Esophagus muscularis mucosa (tissue), 4 donors: ENCODE measurements at regions of chr21 and their contacts with region 1.

Region 1: DNA sequence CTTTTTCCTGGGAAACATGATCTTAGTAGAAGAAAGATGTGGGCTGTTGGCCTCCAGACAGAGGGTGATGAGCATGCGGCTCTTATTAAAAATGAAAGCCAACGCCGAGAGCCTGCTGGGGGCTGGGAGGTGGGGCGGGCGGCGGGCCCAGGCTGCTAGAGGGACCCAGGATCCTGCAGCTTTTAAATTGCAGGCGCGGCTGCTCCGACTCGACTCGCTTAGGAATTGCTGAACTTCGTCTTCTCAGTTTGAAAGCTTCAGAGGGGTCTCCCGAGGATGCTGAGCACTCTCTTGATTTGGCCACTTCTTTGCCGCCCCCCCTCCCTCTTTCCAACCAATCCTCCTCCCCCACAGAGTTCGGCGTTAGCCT is 1.2 kb downstream of the AGPAT3 start:
- DNase-seq: no peak
- H3K4me3 ChIP-seq: peak overlapping the region; percentile 92 to 97 (median 96)
- H3K27ac ChIP-seq: peak overlapping the region; percentile 95 to 97 (median 96)
- H3K4me1 ChIP-seq: peaks cover 27 to 47% (median 43%) of the 10 kb centered on the region in 4 donors
- H3K27me3 ChIP-seq: no peaks in the 10 kb centered on the region
- CTCF ChIP-seq: no peak
- EP300 ChIP-seq: no peak
- POLR2A ChIP-seq: no peak

Region 2: DNA sequence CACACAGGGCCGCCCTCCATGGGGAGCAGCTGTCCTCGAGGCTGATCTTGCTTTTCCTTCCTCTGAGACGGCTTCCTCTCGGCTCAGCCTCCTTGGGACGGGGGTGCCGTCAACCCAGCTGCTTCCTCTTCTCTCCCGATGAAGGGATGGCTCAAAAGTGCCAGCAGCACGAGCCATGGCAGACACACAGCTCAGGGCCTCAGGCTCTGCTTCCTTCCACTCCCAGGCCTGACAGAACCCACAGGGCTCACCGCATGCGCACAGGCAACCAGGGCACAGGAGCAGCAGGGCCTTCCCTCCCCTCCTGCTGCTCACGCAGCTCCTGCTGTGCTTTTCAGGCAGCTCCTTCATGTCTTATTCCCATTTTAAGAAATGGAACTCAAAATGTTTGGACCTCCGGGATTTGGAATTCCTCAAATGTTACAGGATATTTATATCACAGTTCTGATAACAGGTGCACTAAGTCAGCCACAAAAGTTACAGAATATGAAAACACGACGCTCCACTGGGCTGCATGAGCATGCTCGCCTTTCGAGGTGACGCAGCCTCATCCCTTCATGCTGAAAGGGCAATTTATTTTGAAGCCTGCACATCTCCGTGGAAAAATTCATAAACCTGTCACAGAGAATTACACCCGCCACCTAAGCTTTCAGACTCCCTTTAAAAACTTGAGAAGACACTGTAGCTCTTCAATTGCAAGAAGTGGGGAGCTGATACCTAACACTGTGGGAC is 291.3 kb before region 1 on chr21:
- intact Hi-C with region 1: no loop called
- DNase-seq: no peak
- H3K4me3 ChIP-seq: no peak overlapping the region
- H3K27ac ChIP-seq: peak overlapping the region; percentile 81 to 86 (median 84)
- H3K4me1 ChIP-seq: peaks cover 0 to 19% (median 18%) of the 10 kb centered on the region in 4 donors
- H3K27me3 ChIP-seq: no peaks in the 10 kb centered on the region
- CTCF ChIP-seq: no peak
- EP300 ChIP-seq: no peak
- POLR2A ChIP-seq: no peak

Region 3: DNA sequence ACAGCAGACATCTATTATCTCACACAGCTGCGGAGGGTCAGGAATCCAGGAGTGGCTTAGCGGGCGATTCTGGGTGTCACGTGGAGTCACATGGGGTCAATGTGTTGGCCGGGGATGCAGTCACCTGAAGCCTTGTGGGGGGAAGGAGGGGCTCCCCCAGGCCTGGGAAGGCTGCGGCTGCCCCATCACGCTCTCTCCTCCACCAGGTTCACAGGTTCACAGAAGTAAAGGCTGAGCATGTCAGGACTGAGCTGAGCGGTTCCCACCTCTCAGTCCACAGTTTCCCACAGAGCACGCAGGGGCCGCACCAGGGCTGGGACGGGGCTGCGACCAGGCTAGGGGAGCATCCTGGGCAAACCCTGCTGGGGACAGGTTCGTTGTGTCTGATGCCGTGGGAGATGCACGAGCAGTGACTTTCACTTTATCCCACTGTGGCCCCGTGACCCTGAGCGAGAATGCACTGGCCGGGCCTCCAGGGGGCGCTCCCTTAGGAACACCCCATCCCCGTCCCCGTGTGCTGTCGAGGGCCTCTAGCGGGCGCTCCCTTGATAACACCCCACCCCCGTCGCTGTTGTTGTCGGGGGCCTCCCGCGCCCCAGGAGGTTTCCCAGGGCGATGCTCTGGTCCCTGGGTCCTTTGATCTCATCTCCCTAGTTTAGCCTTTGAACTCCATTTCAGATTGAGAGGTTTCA is 72.7 kb after region 1 on chr21:
- intact Hi-C with region 1: loop called (anchors 5 kb)
- DNase-seq: peak; percentile 96
- H3K4me3 ChIP-seq: peak overlapping the region; percentile 39 to 50 (median 40)
- H3K27ac ChIP-seq: peak overlapping the region in 2 of 4 donors; percentile 5 to 51
- H3K4me1 ChIP-seq: peaks cover 27 to 45% (median 36%) of the 10 kb centered on the region in 4 donors
- H3K27me3 ChIP-seq: no peaks in the 10 kb centered on the region
- CTCF ChIP-seq: peak; percentile 71 to 87 (median 85)
- EP300 ChIP-seq: no peak
- POLR2A ChIP-seq: no peak